MCF 10A (cell line): ENCODE measurements at regions of chr14 and their contacts with region 1.

Region 1: GRCh38 chr14:21711360-21711961 is 37.8 kb upstream of the OR4E1 start:
- DNase-seq: peak; percentile 57
- H3K4me3 Mint-ChIP-seq: no peak overlapping the region
- H3K27ac Mint-ChIP-seq: no peak overlapping the region
- H3K4me1 Mint-ChIP-seq: no peaks in the 10 kb centered on the region
- H3K27me3 Mint-ChIP-seq: peaks cover 73% of the 10 kb centered on the region
- CTCF ChIP-seq: peak; percentile 61

Region 2: GRCh38 chr14:21408147-21408546 is 303.3 kb before region 1 on chr14:
- CTCF ChIA-PET with region 1: no interaction called
- POLR2A ChIA-PET with region 1: no interaction called
- intact Hi-C with region 1: no loop called
- DNase-seq: peak; percentile 62
- H3K4me3 Mint-ChIP-seq: no peak overlapping the region
- H3K27ac Mint-ChIP-seq: no peak overlapping the region
- H3K4me1 Mint-ChIP-seq: peaks cover 12% of the 10 kb centered on the region
- H3K27me3 Mint-ChIP-seq: no peaks in the 10 kb centered on the region
- CTCF ChIP-seq: no peak

Region 3: DNA sequence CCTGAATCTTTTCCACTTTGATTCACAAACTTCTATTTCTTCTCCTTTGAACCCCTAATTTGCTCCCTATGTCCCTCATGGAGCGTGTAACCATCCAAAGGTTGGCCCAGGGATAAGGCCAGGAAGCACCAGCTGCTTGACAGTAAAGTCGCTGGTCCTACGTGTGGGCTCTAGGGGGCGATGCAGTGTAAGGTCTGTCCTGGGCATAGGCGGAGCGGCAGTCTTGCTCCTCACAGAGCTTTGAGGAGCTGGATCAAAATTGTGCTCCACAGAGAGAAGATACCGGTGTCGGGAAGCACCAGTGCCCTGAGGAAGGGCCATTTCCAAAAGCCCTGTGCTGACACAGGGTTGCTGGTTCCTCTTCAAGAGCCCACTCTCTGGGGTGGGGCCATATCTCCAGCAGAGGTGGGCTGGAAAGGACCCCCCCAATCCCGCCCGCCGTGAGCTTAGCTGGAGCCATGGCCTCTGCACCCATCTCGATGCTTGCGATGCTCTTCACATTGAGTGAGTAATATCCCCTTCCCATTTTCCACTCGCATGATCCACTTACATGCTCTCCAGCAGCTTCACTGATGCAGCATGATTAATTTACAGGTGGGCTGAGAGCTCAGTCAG is 12.1 kb after region 1 on chr14:
- CTCF ChIA-PET with region 1: interaction called, 10 read pairs
- POLR2A ChIA-PET with region 1: no interaction called
- intact Hi-C with region 1: no loop called
- DNase-seq: peak; percentile 56
- H3K4me3 Mint-ChIP-seq: no peak overlapping the region
- H3K27ac Mint-ChIP-seq: no peak overlapping the region
- H3K4me1 Mint-ChIP-seq: no peaks in the 10 kb centered on the region
- H3K27me3 Mint-ChIP-seq: peaks cover 95% of the 10 kb centered on the region
- CTCF ChIP-seq: no peak

Region 4: DNA sequence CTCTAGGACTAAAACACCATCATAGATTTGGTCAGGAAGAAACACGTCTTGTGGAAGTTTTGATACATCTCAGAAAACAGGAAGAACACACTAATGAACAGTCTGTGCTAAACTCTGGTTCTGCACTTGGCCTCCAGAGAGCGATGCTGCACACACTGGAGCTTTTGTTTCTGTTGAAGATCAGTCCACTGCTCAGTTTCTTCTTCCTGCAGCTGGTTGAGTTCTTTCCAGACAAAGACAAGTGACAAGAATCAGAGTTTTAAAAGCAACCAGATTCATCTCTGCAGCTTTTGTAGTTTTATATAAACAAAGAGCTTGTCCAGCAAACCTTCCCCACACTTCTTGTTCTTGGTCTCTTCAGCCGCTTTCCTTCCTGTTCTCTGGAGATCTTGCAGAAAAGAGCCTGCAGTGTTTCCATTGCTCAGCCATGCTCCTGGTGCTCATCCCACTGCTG is 191.2 kb after region 1 on chr14:
- CTCF ChIA-PET with region 1: no interaction called
- POLR2A ChIA-PET with region 1: no interaction called
- intact Hi-C with region 1: no loop called
- DNase-seq: peak; percentile 3
- H3K4me3 Mint-ChIP-seq: no peak overlapping the region
- H3K27ac Mint-ChIP-seq: no peak overlapping the region
- H3K4me1 Mint-ChIP-seq: no peaks in the 10 kb centered on the region
- H3K27me3 Mint-ChIP-seq: peaks cover 49% of the 10 kb centered on the region
- CTCF ChIP-seq: no peak

Region 5: DNA sequence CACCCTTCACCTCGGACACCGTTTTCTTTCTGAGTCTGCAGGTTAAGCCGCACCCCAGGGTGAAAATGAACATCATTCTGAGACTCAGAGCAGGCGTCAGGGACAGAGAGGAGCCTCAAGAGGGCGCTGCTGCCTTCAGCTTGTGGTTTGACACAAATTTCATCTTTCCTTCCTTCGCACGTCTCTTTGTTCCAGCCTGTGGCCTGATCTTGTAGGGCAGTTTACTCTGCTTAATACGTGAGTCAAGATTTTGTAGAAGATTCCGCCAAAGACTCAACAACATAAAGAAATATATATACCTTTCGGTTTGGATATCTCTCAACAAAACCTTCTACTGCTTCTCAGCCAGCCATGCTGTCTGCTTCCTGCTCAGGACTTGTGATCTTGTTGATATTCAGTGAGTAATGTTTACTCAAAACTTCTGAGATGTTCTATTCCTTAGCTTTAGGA is 291.4 kb after region 1 on chr14:
- CTCF ChIA-PET with region 1: no interaction called
- POLR2A ChIA-PET with region 1: no interaction called
- intact Hi-C with region 1: no loop called
- DNase-seq: peak; percentile 34
- H3K4me3 Mint-ChIP-seq: no peak overlapping the region
- H3K27ac Mint-ChIP-seq: no peak overlapping the region
- H3K4me1 Mint-ChIP-seq: no peaks in the 10 kb centered on the region
- H3K27me3 Mint-ChIP-seq: peaks cover 31% of the 10 kb centered on the region
- CTCF ChIP-seq: peak; percentile 16